Heart left ventricle (tissue), 16 donors: ENCODE measurements at regions of chr1 and their contacts with region 1.

Region 1: GRCh38 chr1:42052072-42052699 is 101.0 kb upstream of the GUCA2B start:
- DNase-seq: no peak
- ATAC-seq: peak in 2 of 4 donors; percentile 51 to 65
- H3K4me3 ChIP-seq: no peak overlapping the region
- H3K27ac ChIP-seq: peak overlapping the region in 4 of 12 donors; percentile 23 to 63 (median 38)
- H3K4me1 ChIP-seq: peaks cover 0 to 11% (median 0%) of the 10 kb centered on the region in 12 donors
- H3K27me3 ChIP-seq: no peaks in the 10 kb centered on the region
- CTCF ChIP-seq: no peak
- POLR2A ChIP-seq: no peak

Region 2: GRCh38 chr1:42128964-42129363 is 76.8 kb after region 1 on chr1:
- intact Hi-C with region 1: loop called in 1 of 10 experiments (anchors 10 kb)
- DNase-seq: no peak
- ATAC-seq: no peak
- H3K4me3 ChIP-seq: no peak overlapping the region
- H3K27ac ChIP-seq: no peak overlapping the region
- H3K4me1 ChIP-seq: no peaks in the 10 kb centered on the region
- H3K27me3 ChIP-seq: no peaks in the 10 kb centered on the region
- CTCF ChIP-seq: no peak
- POLR2A ChIP-seq: no peak